CD4-positive, alpha-beta T cell (primary cell): ENCODE measurements at regions of chr12 and their contacts with region 1.

Region 1: GRCh38 chr12:49232940-49233841 is 31.7 kb upstream of the TUBA1C start:
- DNase-seq: no peak
- ATAC-seq: no peak
- H3K4me3 ChIP-seq: no peak overlapping the region
- H3K4me3 Mint-ChIP-seq: peak overlapping the region; percentile 67
- H3K27ac ChIP-seq: peak overlapping the region in 1 of 2 donors; percentile 26
- H3K27ac Mint-ChIP-seq: peak overlapping the region; percentile 79
- H3K4me1 ChIP-seq: peaks cover 17% of the 10 kb centered on the region
- H3K4me1 Mint-ChIP-seq: peaks cover 15% of the 10 kb centered on the region
- H3K27me3 ChIP-seq: no peaks in the 10 kb centered on the region
- H3K27me3 Mint-ChIP-seq: no peaks in the 10 kb centered on the region
- CTCF ChIP-seq: no peak

Region 2: DNA sequence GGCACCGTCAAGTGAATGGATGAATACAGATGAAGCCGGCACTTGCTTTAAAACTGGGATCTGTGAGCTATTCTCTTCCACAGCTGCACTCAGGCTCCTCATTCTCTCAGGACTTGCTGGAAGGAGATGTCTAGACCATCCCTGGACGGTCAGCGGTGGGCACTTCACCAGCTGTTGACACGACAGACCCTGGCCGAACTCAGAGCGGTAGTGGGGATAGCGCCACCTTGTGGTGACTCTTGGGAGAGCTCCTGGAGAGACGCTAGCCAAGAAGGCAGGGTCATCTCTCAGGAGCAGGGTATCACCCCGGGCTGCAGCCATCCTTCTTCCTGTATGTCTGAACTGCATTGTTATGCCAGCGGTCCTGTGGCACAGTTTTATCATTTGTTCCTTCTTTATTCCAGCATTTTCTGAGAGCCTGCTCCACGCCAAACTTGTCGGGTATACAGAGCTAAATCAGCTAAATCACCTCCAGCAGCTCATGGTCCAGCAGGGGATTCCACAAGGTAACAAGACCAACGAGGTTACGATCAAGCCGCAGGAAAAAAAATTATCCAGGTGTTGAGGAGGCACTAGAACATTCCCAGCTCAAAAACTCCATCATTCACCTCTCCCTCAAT is 245.1 kb before region 1 on chr12:
- CTCF ChIA-PET with region 1: no interaction called
- POLR2A ChIA-PET with region 1: no interaction called
- intact Hi-C with region 1: no loop called
- DNase-seq: peak; percentile 50 to 85 (median 68)
- ATAC-seq: peak; percentile 76
- H3K4me3 ChIP-seq: no peak overlapping the region
- H3K4me3 Mint-ChIP-seq: no peak overlapping the region
- H3K27ac ChIP-seq: no peak overlapping the region
- H3K27ac Mint-ChIP-seq: no peak overlapping the region
- H3K4me1 ChIP-seq: peaks cover 7% of the 10 kb centered on the region
- H3K4me1 Mint-ChIP-seq: peaks cover 6% of the 10 kb centered on the region
- H3K27me3 ChIP-seq: peaks cover 0 to 23% of the 10 kb centered on the region in 2 experiments
- H3K27me3 Mint-ChIP-seq: peaks cover 50% of the 10 kb centered on the region
- CTCF ChIP-seq: peak; percentile 81

Region 3: DNA sequence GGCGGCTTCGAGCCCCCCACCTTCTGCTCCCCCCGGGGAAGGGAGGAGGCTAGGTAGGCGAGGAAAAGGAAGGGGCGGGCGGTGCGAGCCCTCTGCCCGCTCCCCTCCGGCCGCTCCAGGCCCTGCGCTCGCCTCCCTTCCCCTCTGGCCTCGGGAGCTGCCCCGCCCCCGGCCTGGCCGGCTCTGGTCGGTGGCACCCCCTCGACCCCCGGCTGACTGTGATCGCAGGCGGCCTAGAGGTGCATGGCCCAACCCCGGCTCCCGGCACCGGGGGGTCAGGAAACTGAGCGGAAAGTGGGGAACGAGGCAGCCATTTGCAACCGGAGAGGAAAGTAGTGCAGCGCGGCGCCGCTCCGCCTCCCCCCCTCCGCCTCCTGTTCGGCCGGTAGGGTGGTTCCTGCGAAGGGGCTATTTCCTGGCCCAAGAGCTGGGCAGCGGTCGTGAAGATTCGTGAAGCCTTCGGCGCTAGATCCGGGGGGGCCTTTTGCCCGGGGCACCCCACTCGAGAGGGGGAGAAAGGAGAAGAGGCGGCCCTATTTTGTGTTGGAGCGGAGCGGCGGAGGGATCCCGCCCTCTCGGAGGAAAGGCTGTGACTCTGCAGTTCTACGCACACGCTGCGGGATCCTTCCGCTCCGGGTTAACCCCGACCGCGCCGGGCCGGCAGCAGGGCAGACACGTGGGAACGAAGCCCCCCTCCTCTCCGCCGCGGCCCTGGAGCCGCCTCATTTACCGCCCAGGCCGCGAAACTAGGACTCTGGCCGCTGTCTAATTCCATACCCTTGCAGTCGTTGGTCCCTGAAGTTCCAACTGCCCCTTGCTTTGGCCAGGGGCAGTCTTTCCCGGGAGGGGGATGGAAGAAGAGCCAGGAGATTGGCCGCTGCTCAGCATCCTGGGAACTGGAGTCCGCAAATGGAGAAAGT is 172.7 kb before region 1 on chr12 and contains the start of gene KMT2D:
- CTCF ChIA-PET with region 1: interaction called, 9 read pairs
- POLR2A ChIA-PET with region 1: interaction called, 6 read pairs
- intact Hi-C with region 1: loop called in 1 of 2 experiments (anchors 2 kb)
- DNase-seq: peak; percentile 78 to 95 (median 86)
- ATAC-seq: peak; percentile 68
- H3K4me3 ChIP-seq: peak within 1 kb of the TSS; percentile 96
- H3K4me3 Mint-ChIP-seq: peak within 1 kb of the TSS; percentile 97
- H3K27ac ChIP-seq: peak within 1 kb of the TSS; percentile 90 to 93
- H3K27ac Mint-ChIP-seq: peak within 1 kb of the TSS; percentile 96
- H3K4me1 ChIP-seq: peaks cover 56% of the 10 kb centered on the region
- H3K4me1 Mint-ChIP-seq: peaks cover 55% of the 10 kb centered on the region
- H3K27me3 ChIP-seq: no peaks in the 10 kb centered on the region
- H3K27me3 Mint-ChIP-seq: no peaks in the 10 kb centered on the region
- CTCF ChIP-seq: no peak
- total RNA-seq, gene KMT2D: 107 to 110 TPM

Region 4: GRCh38 chr12:49110464-49111155 is 122.6 kb before region 1 on chr12 and contains the start of gene LMBR1L:
- CTCF ChIA-PET with region 1: interaction called, 5 read pairs
- POLR2A ChIA-PET with region 1: interaction called, 14 read pairs
- intact Hi-C with region 1: no loop called
- DNase-seq: peak; percentile 92 to 99 (median 95)
- ATAC-seq: peak; percentile 91
- H3K4me3 ChIP-seq: peak within 1 kb of the TSS; percentile 75
- H3K4me3 Mint-ChIP-seq: peak within 1 kb of the TSS; percentile 89
- H3K27ac ChIP-seq: peak within 1 kb of the TSS; percentile 85 to 94
- H3K27ac Mint-ChIP-seq: peak within 1 kb of the TSS; percentile 97
- H3K4me1 ChIP-seq: peaks cover 41% of the 10 kb centered on the region
- H3K4me1 Mint-ChIP-seq: peaks cover 35% of the 10 kb centered on the region
- H3K27me3 ChIP-seq: no peaks in the 10 kb centered on the region
- H3K27me3 Mint-ChIP-seq: no peaks in the 10 kb centered on the region
- CTCF ChIP-seq: peak; percentile 61
- total RNA-seq, gene LMBR1L: 401 to 418 TPM

Region 5: DNA sequence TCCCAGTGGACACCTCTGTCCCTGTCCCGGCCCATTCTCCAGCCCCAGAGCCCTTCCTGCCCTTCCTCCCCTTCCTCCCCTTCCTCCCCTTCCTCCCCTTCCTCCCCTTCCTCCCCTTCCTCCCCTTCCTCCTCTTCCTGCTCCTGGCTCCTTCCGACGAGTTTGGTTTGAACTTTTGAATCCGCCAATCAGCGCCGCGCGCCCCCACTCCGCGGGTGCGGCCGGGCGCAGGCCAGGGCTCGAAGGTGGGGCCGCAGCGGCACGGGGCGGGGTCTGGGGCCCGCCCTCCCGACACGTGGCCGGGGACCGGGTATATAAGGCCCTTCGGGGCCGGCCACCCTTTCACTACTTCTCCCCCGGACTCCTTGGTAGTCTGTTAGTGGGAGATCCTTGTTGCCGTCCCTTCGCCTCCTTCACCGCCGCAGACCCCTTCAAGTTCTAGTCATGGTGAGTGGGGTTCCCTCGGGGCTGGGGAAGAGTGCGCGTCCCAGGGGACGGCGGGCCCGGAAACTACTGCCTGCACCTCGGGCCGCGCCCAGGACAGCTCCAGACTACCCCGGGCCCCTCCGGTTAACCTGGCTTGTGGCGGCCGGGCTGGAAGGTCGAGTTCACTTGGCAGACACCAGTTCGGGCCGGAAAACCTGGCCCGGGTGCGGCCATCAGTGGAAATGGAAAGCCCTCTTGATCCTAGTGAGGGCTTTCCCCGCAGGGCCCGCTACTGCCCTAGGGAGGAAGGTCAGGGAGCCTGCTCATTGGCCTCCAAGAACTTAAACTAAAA is 31.7 kb after region 1 on chr12 and contains the start of gene TUBA1C:
- CTCF ChIA-PET with region 1: interaction called, 6 read pairs
- POLR2A ChIA-PET with region 1: interaction called, 6 read pairs
- intact Hi-C with region 1: loop called in 1 of 2 experiments (anchors 2 kb)
- DNase-seq: peak; percentile 60 to 91 (median 80)
- ATAC-seq: peak; percentile 80
- H3K4me3 ChIP-seq: peak within 1 kb of the TSS; percentile 86
- H3K4me3 Mint-ChIP-seq: peak within 1 kb of the TSS; percentile 99
- H3K27ac ChIP-seq: peak within 1 kb of the TSS; percentile 57 to 74
- H3K27ac Mint-ChIP-seq: peak within 1 kb of the TSS; percentile 92
- H3K4me1 ChIP-seq: peaks cover 38% of the 10 kb centered on the region
- H3K4me1 Mint-ChIP-seq: peaks cover 23% of the 10 kb centered on the region
- H3K27me3 ChIP-seq: no peaks in the 10 kb centered on the region
- H3K27me3 Mint-ChIP-seq: no peaks in the 10 kb centered on the region
- CTCF ChIP-seq: no peak
- total RNA-seq, gene TUBA1C: 23.4 to 28.9 TPM

Region 6: DNA sequence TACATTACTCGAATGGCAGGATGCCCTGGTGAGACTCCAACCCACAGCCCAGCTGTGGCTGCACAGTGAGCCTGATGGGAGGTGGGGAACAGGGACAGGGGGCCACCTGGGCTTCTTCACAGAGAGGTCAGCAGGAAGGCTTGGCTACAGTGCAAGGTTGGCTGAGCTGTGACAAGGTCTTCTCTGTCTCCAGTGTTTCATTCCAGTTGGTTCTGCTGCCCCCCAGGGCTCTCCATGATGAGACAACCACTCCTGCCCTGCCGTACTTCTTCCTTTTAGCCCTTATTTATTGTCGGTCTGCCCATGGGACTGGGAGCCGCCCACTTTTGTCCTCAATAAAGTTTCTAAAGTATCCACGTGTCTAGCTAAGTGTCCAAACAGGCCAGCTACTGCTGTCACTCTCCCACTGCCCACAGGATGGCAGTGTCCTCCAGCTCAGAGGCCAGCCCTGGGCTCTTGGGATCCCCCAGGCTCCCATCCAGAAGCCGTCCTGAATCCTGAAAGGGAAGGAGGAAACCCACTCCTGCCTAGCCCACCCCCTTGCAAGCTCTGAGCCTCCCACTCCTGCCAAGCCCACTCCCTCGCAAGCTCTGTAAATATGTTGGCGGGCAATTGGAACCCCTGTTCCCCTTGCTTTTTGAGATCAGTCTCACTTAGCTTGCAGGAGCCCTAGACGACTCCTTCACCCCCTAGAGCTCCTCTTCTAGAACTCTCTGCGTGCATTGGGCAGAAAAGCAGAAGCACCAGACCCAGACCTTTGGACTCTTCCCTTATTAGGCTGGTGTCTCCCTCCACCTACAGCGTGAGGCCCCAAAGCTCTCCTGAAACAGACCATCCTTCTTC is 98.4 kb after region 1 on chr12:
- CTCF ChIA-PET with region 1: no interaction called
- POLR2A ChIA-PET with region 1: no interaction called
- intact Hi-C with region 1: no loop called
- DNase-seq: peak in 3 of 14 experiments; percentile 37 to 48 (median 48)
- ATAC-seq: peak; percentile 56
- H3K4me3 ChIP-seq: no peak overlapping the region
- H3K4me3 Mint-ChIP-seq: no peak overlapping the region
- H3K27ac ChIP-seq: no peak overlapping the region
- H3K27ac Mint-ChIP-seq: no peak overlapping the region
- H3K4me1 ChIP-seq: peaks cover 13% of the 10 kb centered on the region
- H3K4me1 Mint-ChIP-seq: peaks cover 18% of the 10 kb centered on the region
- H3K27me3 ChIP-seq: peaks cover 34 to 36% of the 10 kb centered on the region in 2 experiments
- H3K27me3 Mint-ChIP-seq: peaks cover 49% of the 10 kb centered on the region
- CTCF ChIP-seq: no peak